GM10248 (cell line): ENCODE measurements at regions of chr17 and their contacts with region 1.

Region 1: GRCh38 chr17:4220655-4221054 is 43.1 kb downstream of the ANKFY1 start:
- DNase-seq: no peak
- CTCF ChIP-seq: no peak

Region 2: GRCh38 chr17:4038076-4038475 is 182.6 kb before region 1 on chr17:
- CTCF ChIA-PET with region 1: no interaction called
- POLR2A ChIA-PET with region 1: no interaction called
- DNase-seq: no peak
- CTCF ChIP-seq: no peak

Region 3: DNA sequence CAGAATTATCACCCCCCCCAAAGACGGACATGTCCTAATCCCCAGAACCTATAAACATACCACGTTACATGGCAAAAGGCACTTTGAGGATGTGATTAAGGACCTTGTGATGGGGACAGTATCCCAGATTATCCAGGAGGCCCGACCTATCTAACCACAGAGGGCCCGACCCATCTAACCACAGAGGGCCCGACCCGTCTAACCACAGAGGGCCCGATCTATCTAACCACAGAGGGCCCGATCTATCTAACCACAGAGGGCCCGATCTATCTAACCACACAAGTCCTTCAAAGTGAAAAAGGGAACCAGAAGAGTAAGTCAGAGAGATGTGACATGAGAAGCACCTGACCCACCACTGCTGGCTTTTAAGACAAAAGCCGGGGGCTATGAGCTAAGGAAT is 13.7 kb before region 1 on chr17:
- CTCF ChIA-PET with region 1: interaction called, 10 read pairs
- POLR2A ChIA-PET with region 1: no interaction called
- DNase-seq: no peak
- CTCF ChIP-seq: no peak

Region 4: DNA sequence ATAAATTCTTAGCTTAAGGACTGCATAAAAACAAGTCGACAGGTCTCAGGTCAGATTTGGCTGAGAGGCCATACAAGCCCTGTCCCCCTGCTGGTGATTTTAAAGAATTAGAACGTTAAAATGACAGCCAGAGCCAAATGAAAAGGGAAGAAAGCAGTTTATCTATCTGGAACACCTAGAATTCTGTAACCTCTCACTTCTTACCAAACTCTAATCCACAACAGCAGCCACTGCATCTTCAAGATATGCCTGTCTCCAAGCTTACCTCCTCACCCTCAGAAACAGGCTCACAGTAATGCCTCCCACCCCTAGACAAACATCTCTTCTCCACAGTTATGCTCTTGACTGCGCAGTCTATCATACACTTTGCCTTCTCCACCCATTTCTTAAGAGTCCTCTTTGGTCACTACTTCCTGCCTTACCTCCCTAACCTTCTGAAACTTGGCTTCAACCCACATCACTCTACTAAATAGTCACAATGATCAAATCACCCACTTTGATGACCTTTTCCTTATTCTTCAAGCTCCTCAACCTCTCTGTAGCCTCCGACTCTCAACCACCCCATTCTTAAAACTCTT is 28.9 kb after region 1 on chr17:
- CTCF ChIA-PET with region 1: interaction called, 31 read pairs
- POLR2A ChIA-PET with region 1: no interaction called
- DNase-seq: peak; percentile 59
- CTCF ChIP-seq: peak; percentile 48

Region 5: DNA sequence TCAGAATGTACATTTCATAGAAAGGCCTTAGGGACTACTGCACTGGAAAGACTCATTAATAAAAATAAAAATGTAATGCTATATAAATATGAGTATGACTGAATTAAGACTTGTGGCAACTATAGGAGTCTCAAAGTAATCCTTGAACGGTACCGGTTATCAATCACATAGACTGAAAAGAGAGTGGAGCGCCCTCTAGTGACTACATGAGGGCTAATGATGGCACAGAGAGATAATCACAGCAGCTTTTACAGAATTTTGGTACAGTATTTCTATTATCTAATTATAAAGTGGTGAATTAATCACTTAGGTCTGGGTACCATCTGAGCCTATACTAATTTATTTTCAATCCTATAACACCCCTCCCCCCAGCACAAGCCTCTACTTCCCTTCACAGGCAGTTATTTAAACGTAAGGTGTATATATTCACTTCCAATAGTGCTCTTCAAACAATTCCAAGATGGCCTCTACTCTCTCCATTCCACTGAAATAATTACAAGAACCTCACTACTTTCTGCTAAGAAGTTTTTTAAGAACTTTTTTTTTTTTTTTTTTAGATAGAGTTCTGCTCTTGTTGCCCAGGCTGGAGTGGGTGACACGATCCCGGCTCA is 83.9 kb after region 1 on chr17:
- CTCF ChIA-PET with region 1: interaction called, 14 read pairs
- POLR2A ChIA-PET with region 1: no interaction called
- DNase-seq: peak; percentile 67
- CTCF ChIP-seq: peak; percentile 65

Region 6: GRCh38 chr17:4407851-4408250 is 187.2 kb after region 1 on chr17:
- CTCF ChIA-PET with region 1: interaction called, 248 read pairs
- POLR2A ChIA-PET with region 1: no interaction called
- DNase-seq: no peak
- CTCF ChIP-seq: no peak

Region 7: GRCh38 chr17:4412933-4413831 is 192.5 kb after region 1 on chr17:
- CTCF ChIA-PET with region 1: interaction called, 248 read pairs
- POLR2A ChIA-PET with region 1: interaction called, 8 read pairs
- DNase-seq: peak; percentile 89
- CTCF ChIP-seq: peak; percentile 99